ENCODE measurements at regions of chr17 and their contacts with region 1.

Region 1: GRCh38 chr17:35051183-35051578 is 12.3 kb downstream of the RFFL start:
- DNase-seq: no peak
- H3K4me3 ChIP-seq: no peak overlapping the region
- CTCF ChIP-seq: no peak

Region 2: GRCh38 chr17:35011671-35012210 is 39.4 kb before region 1 on chr17:
- in situ Hi-C with region 1: loop called (anchors 5 kb)
- DNase-seq: no peak
- H3K4me3 ChIP-seq: no peak overlapping the region
- CTCF ChIP-seq: no peak